PC-3 (cell line): ENCODE measurements at regions of chr16 and their contacts with region 1.

Region 1: DNA sequence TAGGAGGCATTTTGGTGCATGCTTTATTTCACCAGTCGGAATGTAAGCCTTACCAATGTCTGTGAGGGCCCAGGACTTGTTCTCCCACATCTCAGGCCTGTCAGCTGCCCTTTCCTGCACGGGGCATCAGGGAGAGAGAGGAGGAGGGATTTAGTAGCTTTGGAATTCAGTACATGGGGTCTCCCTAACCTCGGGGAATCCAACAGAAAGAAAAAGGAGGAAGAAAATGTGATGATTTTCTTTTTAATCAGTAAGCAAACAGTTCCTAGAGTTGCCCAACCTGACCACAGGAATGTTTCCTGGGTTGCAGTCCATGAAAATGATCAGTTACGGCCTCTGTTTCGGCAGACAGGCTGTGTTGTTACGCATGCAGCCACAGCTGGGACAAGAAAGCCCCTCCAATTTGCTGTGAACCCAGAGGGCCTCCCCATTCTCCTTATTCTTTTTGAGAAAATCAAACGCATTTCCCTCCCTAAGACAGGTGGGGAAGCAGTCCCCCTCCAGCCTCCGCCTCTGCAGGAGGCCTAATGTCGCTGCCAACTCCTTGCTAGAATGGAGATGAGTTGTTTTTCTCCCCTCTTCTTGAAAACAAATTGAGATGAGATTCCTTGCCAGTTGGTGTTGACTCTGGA is 53.1 kb upstream of the TANGO6 start:
- DNase-seq: peak; percentile 85
- ATAC-seq: peak; percentile 80
- H3K4me3 ChIP-seq: peak overlapping the region; percentile 39; the same call in 1 of the 2 replicates
- H3K27ac ChIP-seq: peak overlapping the region; percentile 57
- H3K4me1 ChIP-seq: peaks cover 41% of the 10 kb centered on the region
- H3K27me3 ChIP-seq: no peaks in the 10 kb centered on the region
- CTCF ChIP-seq: no peak

Region 2: GRCh38 chr16:68737046-68737729 is 53.1 kb before region 1 on chr16 and contains the start of gene CDH1:
- CTCF ChIA-PET with region 1: no interaction called
- POLR2A ChIA-PET with region 1: interaction called, 20 read pairs
- intact Hi-C with region 1: no loop called
- DNase-seq: peak; percentile 86
- ATAC-seq: peak; percentile 52
- H3K4me3 ChIP-seq: peak within 1 kb of the TSS; percentile 90
- H3K27ac ChIP-seq: peak within 1 kb of the TSS; percentile 57
- H3K4me1 ChIP-seq: peaks cover 30% of the 10 kb centered on the region
- H3K27me3 ChIP-seq: no peaks in the 10 kb centered on the region
- CTCF ChIP-seq: no peak
- total RNA-seq, gene CDH1: 100 and 124 TPM in 2 replicates